K562 (cell line): ENCODE measurements at regions of chr14 and their contacts with region 1.

Region 1: DNA sequence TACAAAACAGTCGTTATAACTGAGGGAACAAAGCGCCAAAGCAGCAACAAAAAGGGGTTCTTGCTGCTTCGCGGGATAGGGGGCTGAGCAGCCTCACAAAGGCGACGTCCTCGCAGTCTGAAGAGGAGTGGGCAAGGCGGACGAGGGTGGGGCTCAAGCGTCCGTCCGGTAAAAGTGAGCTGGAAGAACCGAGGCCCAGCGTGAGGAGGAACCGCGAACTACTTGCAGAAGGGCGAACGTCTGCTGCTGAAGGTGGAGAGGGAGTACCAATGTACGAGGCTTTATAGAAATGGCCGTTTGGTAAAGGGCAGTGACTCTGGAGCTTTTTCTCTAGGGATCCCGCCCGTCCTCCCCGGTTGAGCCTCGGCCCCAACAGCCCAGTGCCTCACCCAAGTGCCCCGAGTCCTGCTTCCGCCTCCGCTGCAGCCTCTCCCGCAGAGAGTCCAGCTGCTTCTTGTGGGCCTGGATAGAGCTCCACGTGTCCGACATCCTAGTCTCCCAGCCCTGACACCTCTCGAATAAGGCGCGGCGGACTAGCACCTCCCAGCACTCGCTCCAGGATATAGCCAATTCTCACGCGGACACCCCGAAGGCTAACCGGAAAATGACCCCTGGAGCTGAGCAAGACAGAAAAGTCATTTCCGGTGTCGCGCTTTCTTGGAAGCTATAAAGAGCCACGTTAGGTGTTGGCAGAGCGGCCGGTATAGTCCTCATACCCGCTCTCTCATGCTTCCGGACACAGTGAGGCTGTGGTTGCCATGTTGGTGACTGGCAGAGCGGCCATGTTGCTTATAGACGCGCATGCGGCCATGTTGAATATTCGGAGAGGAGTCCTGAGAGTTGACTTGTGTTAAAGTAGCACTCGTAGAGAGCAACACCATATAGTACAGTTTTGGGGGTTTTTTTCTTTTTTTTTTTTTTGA is at the start of gene METTL3:
- DNase-seq: peak; percentile 80 to 97 (median 84)
- ATAC-seq: peak; percentile 97
- H3K4me3 ChIP-seq: peak within 1 kb of the TSS; percentile 59
- H3K27ac ChIP-seq: peak within 1 kb of the TSS; percentile 91
- H3K4me1 ChIP-seq: no peaks in the 10 kb centered on the region; a peak in 2 of 5 replicates
- H3K27me3 ChIP-seq: no peaks in the 10 kb centered on the region
- CTCF ChIP-seq: 0 out of 6 replicates have a peak, but pooled peaks of 1 of the 3 experiments have one; percentile 1
- EP300 ChIP-seq: no peak
- POLR2A ChIP-seq: peak; percentile 91
- RAD21 ChIP-seq: no peak
- polyA plus RNA-seq, gene METTL3: 42.1 to 66.8 TPM

Region 2: DNA sequence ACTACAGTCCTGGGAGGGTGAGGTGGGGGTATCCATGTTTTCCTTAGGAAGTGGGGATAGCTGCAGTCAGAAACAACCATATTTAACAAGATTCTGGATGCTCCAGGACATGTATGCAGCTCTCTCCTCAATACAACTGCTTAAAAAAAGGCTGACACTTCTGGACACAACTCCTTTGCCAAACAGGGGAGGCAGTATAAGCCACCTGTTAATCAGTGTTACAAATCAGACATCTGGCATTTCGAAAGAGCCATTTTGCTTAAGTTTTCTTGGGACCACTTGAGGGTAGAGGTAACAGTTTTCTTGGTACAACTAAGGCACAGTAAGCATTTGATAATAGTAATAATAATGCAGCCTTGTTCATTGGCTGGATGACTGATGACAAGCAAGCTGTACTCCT is 184.0 kb before region 1 on chr14:
- CTCF ChIA-PET with region 1: no interaction called
- POLR2A ChIA-PET with region 1: no interaction called
- in situ Hi-C with region 1: no loop called
- intact Hi-C with region 1: no loop called
- DNase-seq: no peak
- ATAC-seq: peak; percentile 77
- H3K4me3 ChIP-seq: no peak overlapping the region
- H3K27ac ChIP-seq: no peak overlapping the region
- H3K4me1 ChIP-seq: no peaks in the 10 kb centered on the region; a peak in 1 of 5 replicates
- H3K27me3 ChIP-seq: no peaks in the 10 kb centered on the region
- CTCF ChIP-seq: peak in 1 of 3 experiments; percentile 16; a peak in 1 of 6 replicates
- EP300 ChIP-seq: no peak
- POLR2A ChIP-seq: no peak
- RAD21 ChIP-seq: no peak

Region 3: GRCh38 chr14:21476925-21477681 is 33.9 kb before region 1 on chr14 and contains the starts of genes RAB2B and TOX4:
- CTCF ChIA-PET with region 1: no interaction called
- POLR2A ChIA-PET with region 1: interaction called, 3 read pairs
- in situ Hi-C with region 1: no loop called
- intact Hi-C with region 1: loop called (anchors 2 kb)
- DNase-seq: peak; percentile 79 to 96 (median 84)
- ATAC-seq: peak; percentile 98
- H3K4me3 ChIP-seq: peak within 1 kb of the TSS; percentile 74
- H3K27ac ChIP-seq: peak within 1 kb of the TSS; percentile 83
- H3K4me1 ChIP-seq: peaks cover 0 to 4% of the 10 kb centered on the region in 2 experiments; a peak in 1 of 5 replicates
- H3K27me3 ChIP-seq: no peaks in the 10 kb centered on the region
- CTCF ChIP-seq: peak; percentile 92 to 99 (median 98)
- EP300 ChIP-seq: peak; percentile 24; the same call in 1 of the 2 replicates
- POLR2A ChIP-seq: peak; percentile 85
- RAD21 ChIP-seq: 0 out of 4 replicates have a peak, but pooled peaks have one; percentile 13 to 16
- polyA plus RNA-seq, gene RAB2B: 4.6 to 10.2 TPM
- polyA plus RNA-seq, gene TOX4: 41.0 to 76.5 TPM

Region 4: GRCh38 chr14:21498553-21499526 is 12.2 kb before region 1 on chr14:
- CTCF ChIA-PET with region 1: no interaction called
- POLR2A ChIA-PET with region 1: interaction called, 13 read pairs
- in situ Hi-C with region 1: no loop called
- intact Hi-C with region 1: no loop called
- DNase-seq: peak; percentile 39 to 58 (median 44)
- ATAC-seq: peak; percentile 78
- H3K4me3 ChIP-seq: no peak overlapping the region
- H3K27ac ChIP-seq: no peak overlapping the region
- H3K4me1 ChIP-seq: no peaks in the 10 kb centered on the region
- H3K27me3 ChIP-seq: no peaks in the 10 kb centered on the region
- CTCF ChIP-seq: peak; percentile 36 to 60 (median 54); a peak in 4 of 6 replicates
- EP300 ChIP-seq: no peak
- POLR2A ChIP-seq: no peak
- RAD21 ChIP-seq: peak; percentile 38 to 63; a peak in 3 of 4 replicates

Region 5: GRCh38 chr14:21525962-21526671 is 15.1 kb after region 1 on chr14 and contains the start of gene SALL2:
- CTCF ChIA-PET with region 1: no interaction called
- POLR2A ChIA-PET with region 1: interaction called, 39 read pairs
- in situ Hi-C with region 1: no loop called
- intact Hi-C with region 1: loop called (anchors 2 kb)
- DNase-seq: peak; percentile 84 to 93 (median 86)
- ATAC-seq: peak; percentile 90
- H3K4me3 ChIP-seq: peak within 1 kb of the TSS; percentile 68
- H3K27ac ChIP-seq: peak within 1 kb of the TSS; percentile 80
- H3K4me1 ChIP-seq: peaks cover 34 to 38% of the 10 kb centered on the region in 2 experiments
- H3K27me3 ChIP-seq: no peaks in the 10 kb centered on the region
- CTCF ChIP-seq: no peak
- EP300 ChIP-seq: no peak
- POLR2A ChIP-seq: peak; percentile 74
- RAD21 ChIP-seq: no peak
- polyA plus RNA-seq, gene SALL2: 6.6 to 9.9 TPM

Region 6: DNA sequence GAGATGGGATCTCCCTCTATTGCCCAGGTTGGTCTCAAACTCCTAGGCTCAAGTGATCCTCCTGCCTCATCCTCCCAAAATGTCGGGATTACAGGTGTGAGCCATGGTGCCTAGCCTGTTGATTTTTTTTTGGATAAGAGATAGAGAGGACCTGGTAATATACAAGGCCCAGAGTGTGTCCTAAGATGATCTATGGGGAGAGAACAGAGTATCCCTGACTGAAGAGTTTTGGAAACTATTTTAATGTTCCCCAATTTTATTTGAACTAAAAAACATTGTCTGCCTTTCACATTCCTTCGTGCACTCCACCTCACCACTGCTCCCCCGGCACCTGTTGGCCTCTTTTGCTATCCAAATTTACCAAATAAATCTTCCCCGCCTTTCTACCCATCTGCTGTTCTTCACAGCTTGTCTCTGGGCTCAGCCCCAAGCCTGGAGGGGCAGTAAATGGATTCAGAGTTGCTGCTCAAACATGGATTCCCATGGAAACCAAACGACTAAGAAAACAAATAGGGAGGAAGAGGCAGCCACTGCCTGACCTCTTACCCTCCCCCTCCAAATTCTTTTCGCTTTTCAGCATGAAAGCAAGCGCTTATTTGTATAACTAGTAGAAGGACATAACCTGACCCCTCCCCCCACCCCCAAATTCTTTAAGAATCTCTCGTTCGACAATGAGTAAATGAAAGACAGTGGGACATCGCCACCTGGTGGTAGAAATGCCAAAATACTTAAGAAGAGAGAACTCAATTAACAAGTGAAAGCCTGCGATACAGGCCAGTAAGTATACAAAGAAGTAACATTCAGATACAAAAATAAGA is 46.3 kb after region 1 on chr14:
- CTCF ChIA-PET with region 1: interaction called, 4 read pairs
- POLR2A ChIA-PET with region 1: interaction called, 3 read pairs
- in situ Hi-C with region 1: no loop called
- intact Hi-C with region 1: loop called (anchors 5 kb)
- DNase-seq: peak; percentile 49 to 88 (median 51)
- ATAC-seq: peak; percentile 84
- H3K4me3 ChIP-seq: peak overlapping the region; percentile 34
- H3K27ac ChIP-seq: peak overlapping the region; percentile 48; the same call in 1 of the 3 replicates
- H3K4me1 ChIP-seq: no peaks in the 10 kb centered on the region; a peak in 1 of 5 replicates
- H3K27me3 ChIP-seq: no peaks in the 10 kb centered on the region
- CTCF ChIP-seq: peak; percentile 49 to 81 (median 60); a peak in 5 of 6 replicates
- EP300 ChIP-seq: no peak; the same call in 1 of the 2 replicates
- POLR2A ChIP-seq: no peak
- RAD21 ChIP-seq: peak; percentile 72 to 77

Region 7: DNA sequence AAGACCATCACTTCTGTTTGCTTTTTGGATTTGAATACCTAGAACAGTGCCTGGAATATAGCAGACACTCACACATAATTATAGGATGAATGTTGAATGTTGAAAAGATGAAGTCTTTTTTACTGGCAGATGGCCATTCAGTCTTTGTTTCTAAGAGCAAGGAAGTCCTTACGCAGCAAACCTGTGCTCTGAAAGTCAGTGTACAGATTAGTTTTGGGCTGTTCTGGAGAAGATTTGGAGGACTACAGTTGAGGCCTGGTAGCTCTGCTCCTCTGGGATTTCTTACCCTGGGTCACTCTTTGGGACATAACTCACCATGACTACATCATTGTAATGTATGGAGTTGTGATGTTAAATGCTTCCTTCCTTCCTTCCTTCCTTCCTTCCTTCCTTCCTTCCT is 146.0 kb after region 1 on chr14:
- CTCF ChIA-PET with region 1: no interaction called
- POLR2A ChIA-PET with region 1: no interaction called
- in situ Hi-C with region 1: no loop called
- intact Hi-C with region 1: no loop called
- DNase-seq: no peak
- ATAC-seq: no peak
- H3K4me3 ChIP-seq: no peak overlapping the region
- H3K27ac ChIP-seq: no peak overlapping the region
- H3K4me1 ChIP-seq: no peaks in the 10 kb centered on the region
- H3K27me3 ChIP-seq: no peaks in the 10 kb centered on the region; a peak in 1 of 5 replicates
- CTCF ChIP-seq: no peak
- EP300 ChIP-seq: no peak
- POLR2A ChIP-seq: no peak
- RAD21 ChIP-seq: no peak

Region 8: GRCh38 chr14:21825149-21825743 is 314.2 kb after region 1 on chr14:
- CTCF ChIA-PET with region 1: no interaction called
- POLR2A ChIA-PET with region 1: no interaction called
- in situ Hi-C with region 1: no loop called
- intact Hi-C with region 1: no loop called
- DNase-seq: peak; percentile 38 to 62 (median 52)
- ATAC-seq: peak; percentile 86
- H3K4me3 ChIP-seq: no peak overlapping the region
- H3K27ac ChIP-seq: no peak overlapping the region
- H3K4me1 ChIP-seq: no peaks in the 10 kb centered on the region
- H3K27me3 ChIP-seq: no peaks in the 10 kb centered on the region
- CTCF ChIP-seq: peak; percentile 55 to 76 (median 62)
- EP300 ChIP-seq: no peak
- POLR2A ChIP-seq: no peak
- RAD21 ChIP-seq: no peak